ENCODE measurements at regions of chr1 and their contacts with region 1.

Region 1: DNA sequence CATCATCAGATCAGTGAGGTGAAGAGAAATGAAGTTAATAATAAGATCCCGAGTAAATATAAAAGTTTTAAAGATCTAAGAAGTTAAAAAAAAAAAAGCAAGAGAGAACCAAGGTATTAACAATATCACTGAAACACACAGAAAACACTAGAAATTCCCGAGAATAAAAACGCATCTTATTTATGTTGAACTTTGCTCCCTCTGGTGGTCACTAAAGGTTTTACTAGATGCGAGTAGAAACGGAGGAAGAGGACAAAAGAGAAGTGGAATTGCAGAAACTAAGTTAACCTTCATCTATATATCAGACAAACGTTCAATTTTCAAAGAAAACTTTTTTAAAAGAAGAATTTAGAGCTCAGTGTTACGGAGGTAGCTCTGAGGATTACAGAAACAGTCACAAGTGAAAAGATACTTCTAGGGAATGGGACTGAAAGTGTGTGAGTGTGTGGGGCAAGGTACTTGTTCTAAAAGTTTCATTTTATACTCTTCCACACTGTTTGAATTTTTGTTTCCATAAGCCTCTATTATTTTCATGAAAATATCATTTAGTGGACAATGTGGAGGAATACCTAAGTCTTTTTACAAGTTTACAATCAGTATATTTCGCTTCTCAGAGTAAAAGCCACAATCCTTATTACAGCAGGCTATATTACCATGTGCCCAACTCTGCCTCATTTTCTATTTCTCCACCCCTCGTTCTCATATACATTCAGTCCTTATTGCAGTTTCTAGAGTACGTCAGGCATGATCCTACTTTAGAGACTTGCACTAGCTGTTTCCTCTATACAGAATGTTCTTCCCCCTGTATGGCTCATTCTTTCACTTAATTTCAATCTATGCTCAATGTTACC is 19.7 kb downstream of the ACBD6 start:
- DNase-seq: peak; percentile 33
- ATAC-seq: no peak
- H3K4me3 Mint-ChIP-seq: no peak overlapping the region
- H3K27ac Mint-ChIP-seq: no peak overlapping the region
- H3K4me1 Mint-ChIP-seq: peaks cover 9% of the 10 kb centered on the region
- H3K27me3 Mint-ChIP-seq: no peaks in the 10 kb centered on the region

Region 2: GRCh38 chr1:180252638-180253536 is 229.8 kb before region 1 on chr1:
- CTCF ChIA-PET with region 1: interaction called, 19 read pairs
- POLR2A ChIA-PET with region 1: no interaction called
- DNase-seq: peak; percentile 80
- ATAC-seq: peak; percentile 59
- H3K4me3 Mint-ChIP-seq: no peak overlapping the region
- H3K27ac Mint-ChIP-seq: no peak overlapping the region
- H3K4me1 Mint-ChIP-seq: no peaks in the 10 kb centered on the region
- H3K27me3 Mint-ChIP-seq: peaks cover 2% of the 10 kb centered on the region

Region 3: DNA sequence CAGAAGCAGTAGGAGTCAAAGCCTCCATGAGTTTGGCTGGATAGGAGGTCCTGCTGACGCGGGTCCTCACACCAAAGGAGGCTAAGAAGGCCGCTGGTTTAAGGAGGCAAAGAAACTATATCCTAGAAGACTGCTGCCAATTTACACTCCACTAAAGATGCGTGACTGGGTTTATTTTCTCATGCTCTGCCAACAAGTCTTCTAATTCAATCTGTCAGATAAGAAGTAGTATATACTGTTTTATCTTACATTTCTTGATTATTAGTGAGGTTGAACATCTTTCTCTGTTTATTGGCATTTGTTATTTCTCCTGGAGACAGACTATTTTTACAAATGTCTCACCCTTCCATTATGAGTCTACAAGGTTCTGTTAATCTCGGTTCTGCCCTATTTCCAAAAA is 14.3 kb before region 1 on chr1:
- CTCF ChIA-PET with region 1: interaction called, 13 read pairs
- POLR2A ChIA-PET with region 1: no interaction called
- DNase-seq: no peak
- ATAC-seq: no peak
- H3K4me3 Mint-ChIP-seq: no peak overlapping the region
- H3K27ac Mint-ChIP-seq: no peak overlapping the region
- H3K4me1 Mint-ChIP-seq: peaks cover 3% of the 10 kb centered on the region
- H3K27me3 Mint-ChIP-seq: no peaks in the 10 kb centered on the region

Region 4: GRCh38 chr1:180494370-180494769 is 11.7 kb after region 1 on chr1:
- CTCF ChIA-PET with region 1: interaction called, 30 read pairs
- POLR2A ChIA-PET with region 1: no interaction called
- DNase-seq: no peak
- ATAC-seq: no peak
- H3K4me3 Mint-ChIP-seq: no peak overlapping the region
- H3K27ac Mint-ChIP-seq: no peak overlapping the region
- H3K4me1 Mint-ChIP-seq: peaks cover 3% of the 10 kb centered on the region
- H3K27me3 Mint-ChIP-seq: no peaks in the 10 kb centered on the region

Region 5: GRCh38 chr1:180502360-180503273 is 20.0 kb after region 1 on chr1 and contains the start of gene ACBD6:
- CTCF ChIA-PET with region 1: interaction called, 30 read pairs
- POLR2A ChIA-PET with region 1: interaction called, 4 read pairs
- DNase-seq: peak; percentile 89
- ATAC-seq: peak; percentile 93
- H3K4me3 Mint-ChIP-seq: peak within 1 kb of the TSS; percentile 92
- H3K27ac Mint-ChIP-seq: peak within 1 kb of the TSS; percentile 97
- H3K4me1 Mint-ChIP-seq: peaks cover 32% of the 10 kb centered on the region
- H3K27me3 Mint-ChIP-seq: no peaks in the 10 kb centered on the region
- total RNA-seq, gene ACBD6: 35.7 to 37.7 TPM

Measured in activated CD8-positive, alpha-beta T cell treated with anti-CD3 and anti-CD28 coated beads, Interleukin-2, amount 10 ng/mL, durations not matched to agents 7 days and 5 days (primary cell).